Activated CD4-positive, alpha-beta T cell treated with anti-CD3 and anti-CD28 coated beads, Interleukin-2, amount 10 ng/mL, durations not matched to agents 24 days and 14 days (primary cell): ENCODE measurements at regions of chr1 and their contacts with region 1.

Region 1: DNA sequence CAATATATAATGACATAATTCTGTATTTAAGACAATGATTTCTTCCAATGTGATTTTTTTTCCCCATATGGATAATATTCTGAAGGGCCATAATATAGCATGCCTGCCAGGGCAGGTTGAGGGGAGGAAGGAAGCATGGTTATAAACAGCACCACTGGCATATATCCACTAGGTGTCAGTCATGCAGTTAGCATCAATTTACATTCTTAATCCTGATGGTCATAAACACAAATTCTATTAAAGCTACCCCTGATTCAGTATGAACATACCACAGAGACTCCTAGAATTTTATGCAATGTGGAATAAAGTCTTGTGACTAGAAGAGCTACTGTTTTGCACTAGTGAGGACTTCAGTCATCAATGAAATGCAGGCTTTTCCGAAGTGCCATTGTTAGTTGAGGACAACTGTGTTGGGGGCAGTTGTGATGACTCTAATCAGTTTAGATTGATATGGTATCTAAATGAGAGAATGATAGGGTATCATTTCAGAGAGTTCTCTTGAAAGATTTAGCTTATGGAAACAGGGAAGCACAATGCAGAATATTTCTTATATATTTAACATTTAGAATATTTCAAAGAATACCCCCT is 342.7 kb upstream of the NR5A2 start:
- DNase-seq: peak; percentile 73
- H3K4me3 Mint-ChIP-seq: no peak overlapping the region
- H3K27ac Mint-ChIP-seq: no peak overlapping the region
- H3K4me1 Mint-ChIP-seq: no peaks in the 10 kb centered on the region
- H3K27me3 Mint-ChIP-seq: peaks cover 14% of the 10 kb centered on the region

Region 2: GRCh38 chr1:199447906-199448305 is 236.9 kb before region 1 on chr1:
- intact Hi-C with region 1: no loop called
- DNase-seq: no peak
- H3K4me3 Mint-ChIP-seq: no peak overlapping the region
- H3K27ac Mint-ChIP-seq: no peak overlapping the region
- H3K4me1 Mint-ChIP-seq: no peaks in the 10 kb centered on the region
- H3K27me3 Mint-ChIP-seq: peaks cover 9% of the 10 kb centered on the region

Region 3: DNA sequence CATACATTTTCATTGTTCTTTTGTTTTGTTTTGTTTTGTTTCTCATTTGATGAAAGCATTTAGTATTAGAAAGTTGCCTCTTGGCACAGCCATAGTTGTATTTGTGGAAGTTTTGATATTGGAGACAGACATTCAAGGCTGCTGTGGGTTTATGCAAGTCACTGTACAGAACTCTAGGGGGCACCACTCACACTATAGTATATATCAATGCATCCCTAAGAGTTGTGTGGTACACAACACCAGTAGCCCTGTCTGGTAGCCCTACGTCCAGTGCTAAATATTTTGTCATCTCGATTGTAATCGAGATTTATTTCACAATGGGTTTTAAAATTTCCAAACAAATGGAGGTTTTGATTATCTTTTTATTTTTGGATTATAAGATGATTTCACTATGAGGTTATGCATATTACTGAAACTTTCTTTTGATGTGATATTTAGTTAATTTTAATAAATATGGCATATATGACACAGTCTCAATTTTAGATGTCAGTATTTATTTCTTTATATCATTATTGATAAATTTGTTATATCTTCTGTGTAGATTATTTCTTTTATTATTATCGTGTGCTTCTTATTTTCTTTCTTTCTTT is 455.0 kb after region 1 on chr1:
- intact Hi-C with region 1: loop called (anchors 10 kb)
- DNase-seq: peak; percentile 79
- H3K4me3 Mint-ChIP-seq: no peak overlapping the region
- H3K27ac Mint-ChIP-seq: no peak overlapping the region
- H3K4me1 Mint-ChIP-seq: peaks cover 5% of the 10 kb centered on the region
- H3K27me3 Mint-ChIP-seq: peaks cover 9% of the 10 kb centered on the region

Region 4: GRCh38 chr1:200302192-200302920 is 617.6 kb after region 1 on chr1:
- intact Hi-C with region 1: loop called (anchors 10 kb)
- DNase-seq: peak; percentile 90
- H3K4me3 Mint-ChIP-seq: peak overlapping the region; percentile 86
- H3K27ac Mint-ChIP-seq: peak overlapping the region; percentile 17
- H3K4me1 Mint-ChIP-seq: peaks cover 20% of the 10 kb centered on the region
- H3K27me3 Mint-ChIP-seq: peaks cover 38% of the 10 kb centered on the region

Region 5: GRCh38 chr1:200510228-200510623 is 825.4 kb after region 1 on chr1:
- intact Hi-C with region 1: loop called (anchors 1 kb)
- DNase-seq: peak; percentile 90
- H3K4me3 Mint-ChIP-seq: no peak overlapping the region
- H3K27ac Mint-ChIP-seq: no peak overlapping the region
- H3K4me1 Mint-ChIP-seq: peaks cover 3% of the 10 kb centered on the region
- H3K27me3 Mint-ChIP-seq: peaks cover 28% of the 10 kb centered on the region